ENCODE measurements at regions of chr6 and their contacts with region 1.

Region 1: DNA sequence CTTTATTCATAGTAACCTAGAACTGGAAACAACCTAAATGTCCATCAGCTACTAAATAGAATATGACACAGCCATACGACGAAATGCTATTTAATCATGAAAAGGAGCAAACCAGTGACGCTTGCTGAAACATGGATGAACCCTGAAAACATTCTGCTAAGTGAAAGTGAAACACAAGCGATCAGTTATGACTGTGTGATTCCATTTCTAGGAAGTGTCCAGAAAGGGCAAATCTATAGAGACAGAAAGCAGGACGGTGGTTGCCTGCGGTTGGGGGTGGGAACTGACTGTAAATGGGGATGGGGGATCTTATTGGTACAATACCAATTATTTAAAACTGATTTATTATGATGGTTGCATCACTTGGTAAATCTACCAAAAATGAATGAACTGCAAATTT is 126.8 kb downstream of the IPCEF1 start:
- H3K4me3 Mint-ChIP-seq: peak overlapping the region; percentile 24
- H3K27ac Mint-ChIP-seq: peak overlapping the region; percentile 83
- H3K4me1 Mint-ChIP-seq: peaks cover 82% of the 10 kb centered on the region
- H3K27me3 Mint-ChIP-seq: no peaks in the 10 kb centered on the region

Region 2: DNA sequence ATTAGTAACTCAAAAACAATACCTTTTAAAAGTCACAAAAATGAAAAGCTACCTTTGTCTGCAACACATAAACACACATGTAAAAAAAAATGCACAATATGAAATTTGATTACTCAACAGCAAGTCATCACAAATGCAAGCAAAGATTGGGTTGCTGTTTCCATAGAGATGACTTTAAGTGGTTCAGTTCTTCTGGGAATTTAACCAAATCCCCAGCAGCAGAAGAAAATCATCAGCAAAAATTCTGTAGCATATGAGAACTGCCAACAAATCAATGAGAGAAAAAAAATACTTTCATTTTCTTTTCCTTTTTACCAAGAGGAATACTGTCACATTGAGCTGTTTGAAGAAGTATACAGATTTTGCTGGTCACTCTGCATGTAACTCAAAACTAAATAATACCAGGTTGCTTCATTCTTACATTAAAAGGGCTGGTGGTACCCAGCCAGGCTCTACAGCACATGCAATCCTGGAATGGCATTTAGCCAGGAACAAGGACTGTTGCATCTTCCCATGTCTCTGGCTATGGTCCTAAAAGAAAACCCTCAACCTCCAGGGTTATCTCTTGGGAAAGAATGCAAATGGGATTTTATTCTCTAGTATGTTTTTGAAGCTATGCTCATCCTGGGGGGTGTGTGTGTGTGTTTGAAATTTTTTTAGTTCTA is 32.5 kb before region 1 on chr6:
- intact Hi-C with region 1: loop called (anchors 5 kb)
- H3K4me3 Mint-ChIP-seq: peak overlapping the region; percentile 74
- H3K27ac Mint-ChIP-seq: peak overlapping the region; percentile 98
- H3K4me1 Mint-ChIP-seq: peaks cover 70% of the 10 kb centered on the region
- H3K27me3 Mint-ChIP-seq: no peaks in the 10 kb centered on the region

Region 3: GRCh38 chr6:154276810-154277628 is 47.2 kb after region 1 on chr6:
- intact Hi-C with region 1: loop called (anchors 5 kb)
- H3K4me3 Mint-ChIP-seq: no peak overlapping the region
- H3K27ac Mint-ChIP-seq: peak overlapping the region; percentile 79
- H3K4me1 Mint-ChIP-seq: peaks cover 45% of the 10 kb centered on the region
- H3K27me3 Mint-ChIP-seq: no peaks in the 10 kb centered on the region

Region 4: DNA sequence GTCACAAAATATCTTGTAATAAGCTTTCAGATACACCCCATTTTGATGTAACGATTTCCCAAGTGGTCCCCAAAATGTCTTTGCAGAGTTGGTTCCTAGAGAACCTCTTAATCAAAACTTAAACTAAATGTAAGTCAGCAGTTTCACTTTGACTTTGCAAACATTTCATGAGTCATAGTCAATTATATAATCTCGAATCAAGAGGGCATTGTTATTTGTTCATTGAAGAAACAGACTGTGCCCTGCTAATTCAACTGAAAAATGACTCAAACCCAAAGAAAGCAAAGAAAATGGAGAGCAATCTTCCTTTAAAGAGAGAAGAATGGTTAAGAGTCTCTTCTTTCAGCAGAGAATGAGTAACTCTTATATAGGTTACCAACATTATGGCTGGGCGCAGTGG is 68.5 kb after region 1 on chr6:
- intact Hi-C with region 1: no loop called
- H3K4me3 Mint-ChIP-seq: no peak overlapping the region
- H3K27ac Mint-ChIP-seq: peak overlapping the region; percentile 39
- H3K4me1 Mint-ChIP-seq: peaks cover 59% of the 10 kb centered on the region
- H3K27me3 Mint-ChIP-seq: no peaks in the 10 kb centered on the region

Region 5: DNA sequence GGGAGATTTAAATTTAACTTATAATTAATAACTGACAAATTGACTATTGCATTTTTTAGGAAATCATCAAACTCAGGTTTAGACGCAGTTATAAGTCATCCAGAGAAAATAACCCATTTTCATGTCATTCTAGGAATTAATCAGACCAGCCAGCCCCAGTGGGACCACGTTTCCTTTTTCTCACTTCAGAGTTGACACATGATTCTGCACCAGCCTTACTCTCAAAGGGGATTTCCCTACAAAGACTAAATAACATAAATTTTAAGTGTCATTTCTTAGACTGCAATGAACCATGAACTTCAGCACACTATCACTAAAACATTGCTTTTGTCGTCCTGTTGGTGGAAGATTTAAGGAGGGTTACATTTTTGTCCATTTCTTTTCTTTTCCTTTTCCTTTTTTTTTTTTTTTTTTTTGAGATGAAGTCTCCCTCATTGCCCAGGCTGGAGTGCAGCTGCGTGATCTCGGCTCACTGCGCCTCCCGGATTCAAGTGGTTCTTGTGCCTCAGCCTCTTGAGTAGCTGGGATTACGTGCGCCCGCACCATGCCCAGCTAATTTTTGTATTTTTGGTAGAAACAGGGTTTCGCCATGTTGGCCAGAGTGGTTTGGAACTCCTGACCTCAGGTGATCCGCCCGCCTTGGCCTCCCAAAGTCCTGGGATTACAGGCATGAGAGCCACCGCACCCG is 123.3 kb after region 1 on chr6:
- intact Hi-C with region 1: loop called (anchors 10 kb)
- H3K4me3 Mint-ChIP-seq: peak overlapping the region; percentile 13
- H3K27ac Mint-ChIP-seq: peak overlapping the region; percentile 87
- H3K4me1 Mint-ChIP-seq: peaks cover 48% of the 10 kb centered on the region
- H3K27me3 Mint-ChIP-seq: no peaks in the 10 kb centered on the region

Measured in dendritic cell treated with granulocyte-macrophage colony-stimulating factor and Interleukin-4, amounts not matched to agents 40 ng/mL and 50 ng/mL, for 4 days (primary cell).